ENCODE measurements at regions of chr11 and their contacts with region 1.

Region 1: DNA sequence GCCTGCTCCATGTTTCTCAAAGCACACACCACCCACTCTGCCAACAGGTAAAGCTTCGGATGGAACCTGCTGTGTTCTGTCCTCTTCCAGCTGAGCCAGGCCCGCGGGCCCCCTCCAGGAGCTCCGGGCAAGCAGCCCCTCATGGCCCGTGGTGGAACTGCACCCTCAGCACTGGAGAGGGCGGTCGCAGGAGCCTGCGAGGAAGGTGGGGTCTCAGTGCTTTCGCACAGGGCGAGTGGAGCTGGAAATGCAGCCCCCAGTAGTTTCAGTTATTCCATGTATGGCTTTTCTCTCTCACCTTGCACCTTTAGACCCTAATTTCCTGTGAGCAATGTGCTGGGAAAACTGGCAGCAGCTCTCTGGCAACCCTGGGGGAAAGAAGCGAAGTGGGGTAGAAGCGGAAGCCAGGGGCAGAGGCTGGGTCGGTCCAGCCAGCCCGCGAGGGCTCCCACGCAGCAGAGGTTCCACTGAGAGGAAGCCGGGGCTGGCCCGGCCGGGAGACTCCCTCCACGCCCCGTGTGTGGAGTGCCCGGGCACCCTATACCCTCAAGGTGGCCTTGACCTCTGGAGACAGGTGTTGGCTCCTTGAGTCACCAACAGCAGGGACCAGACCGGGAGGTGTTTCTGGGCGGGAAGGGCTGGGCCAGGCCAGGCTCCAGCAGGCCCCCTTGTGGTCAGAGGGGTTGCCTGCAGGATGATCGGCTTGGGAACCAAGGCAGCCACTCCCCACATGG is 119.9 kb upstream of the TMEM45B start:
- DNase-seq: peak; percentile 46 to 57
- H3K4me3 ChIP-seq: no peak overlapping the region
- H3K27ac ChIP-seq: no peak overlapping the region
- H3K4me1 ChIP-seq: peaks cover 14% of the 10 kb centered on the region
- H3K27me3 ChIP-seq: no peaks in the 10 kb centered on the region
- CTCF ChIP-seq: peak; percentile 75

Region 2: GRCh38 chr11:129364143-129364654 is 331.5 kb before region 1 on chr11:
- CTCF ChIA-PET with region 1: no interaction called
- POLR2A ChIA-PET with region 1: no interaction called
- intact Hi-C with region 1: loop called (anchors 1 kb)
- DNase-seq: peak; percentile 85 to 87
- H3K4me3 ChIP-seq: no peak overlapping the region
- H3K27ac ChIP-seq: no peak overlapping the region
- H3K4me1 ChIP-seq: peaks cover 42% of the 10 kb centered on the region
- H3K27me3 ChIP-seq: no peaks in the 10 kb centered on the region
- CTCF ChIP-seq: peak; percentile 97

Region 3: DNA sequence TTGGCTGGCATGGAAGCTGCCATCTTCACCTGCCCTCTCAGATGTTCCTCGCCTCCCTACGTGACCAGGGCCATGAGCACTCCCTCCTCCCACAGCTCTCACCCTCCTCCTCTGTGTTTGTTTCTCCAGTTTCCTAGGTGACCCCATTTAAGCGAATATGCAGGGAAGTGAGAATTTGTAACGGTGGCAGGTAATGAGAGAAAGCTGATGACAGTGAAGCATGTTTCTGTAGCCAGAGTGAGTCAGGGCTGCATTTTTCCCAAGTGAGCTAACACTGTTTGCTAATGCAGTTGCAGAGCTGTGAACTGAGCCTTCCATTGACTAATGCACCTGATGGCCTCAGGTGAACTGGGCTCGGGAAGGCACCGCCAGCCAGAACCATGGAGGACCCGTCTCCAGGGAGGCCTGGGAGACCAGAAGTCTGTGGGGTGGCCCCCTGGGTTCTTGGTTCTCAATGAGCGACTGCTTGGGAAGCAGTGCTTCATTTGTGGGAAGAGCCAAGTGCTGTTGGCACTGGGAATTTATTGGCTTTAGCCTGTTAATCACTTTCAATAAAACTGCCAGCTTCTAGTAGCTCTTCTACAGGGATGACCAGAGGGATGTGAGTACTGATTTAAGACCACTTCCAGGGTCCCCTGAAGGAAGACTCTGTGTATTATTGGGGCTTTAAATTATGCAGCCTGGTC is 255.6 kb before region 1 on chr11:
- CTCF ChIA-PET with region 1: no interaction called
- POLR2A ChIA-PET with region 1: no interaction called
- intact Hi-C with region 1: loop called (anchors 1 kb)
- DNase-seq: peak; percentile 75 to 99
- H3K4me3 ChIP-seq: no peak overlapping the region
- H3K27ac ChIP-seq: peak overlapping the region; percentile 71
- H3K4me1 ChIP-seq: peaks cover 32% of the 10 kb centered on the region
- H3K27me3 ChIP-seq: no peaks in the 10 kb centered on the region
- CTCF ChIP-seq: no peak

Region 4: GRCh38 chr11:129731341-129731740 is 35.6 kb after region 1 on chr11:
- CTCF ChIA-PET with region 1: no interaction called
- POLR2A ChIA-PET with region 1: no interaction called
- intact Hi-C with region 1: loop called (anchors 5 kb)
- DNase-seq: peak; percentile 70 to 98
- H3K4me3 ChIP-seq: no peak overlapping the region
- H3K27ac ChIP-seq: peak overlapping the region; percentile 89
- H3K4me1 ChIP-seq: peaks cover 71% of the 10 kb centered on the region
- H3K27me3 ChIP-seq: no peaks in the 10 kb centered on the region
- CTCF ChIP-seq: no peak

Region 5: DNA sequence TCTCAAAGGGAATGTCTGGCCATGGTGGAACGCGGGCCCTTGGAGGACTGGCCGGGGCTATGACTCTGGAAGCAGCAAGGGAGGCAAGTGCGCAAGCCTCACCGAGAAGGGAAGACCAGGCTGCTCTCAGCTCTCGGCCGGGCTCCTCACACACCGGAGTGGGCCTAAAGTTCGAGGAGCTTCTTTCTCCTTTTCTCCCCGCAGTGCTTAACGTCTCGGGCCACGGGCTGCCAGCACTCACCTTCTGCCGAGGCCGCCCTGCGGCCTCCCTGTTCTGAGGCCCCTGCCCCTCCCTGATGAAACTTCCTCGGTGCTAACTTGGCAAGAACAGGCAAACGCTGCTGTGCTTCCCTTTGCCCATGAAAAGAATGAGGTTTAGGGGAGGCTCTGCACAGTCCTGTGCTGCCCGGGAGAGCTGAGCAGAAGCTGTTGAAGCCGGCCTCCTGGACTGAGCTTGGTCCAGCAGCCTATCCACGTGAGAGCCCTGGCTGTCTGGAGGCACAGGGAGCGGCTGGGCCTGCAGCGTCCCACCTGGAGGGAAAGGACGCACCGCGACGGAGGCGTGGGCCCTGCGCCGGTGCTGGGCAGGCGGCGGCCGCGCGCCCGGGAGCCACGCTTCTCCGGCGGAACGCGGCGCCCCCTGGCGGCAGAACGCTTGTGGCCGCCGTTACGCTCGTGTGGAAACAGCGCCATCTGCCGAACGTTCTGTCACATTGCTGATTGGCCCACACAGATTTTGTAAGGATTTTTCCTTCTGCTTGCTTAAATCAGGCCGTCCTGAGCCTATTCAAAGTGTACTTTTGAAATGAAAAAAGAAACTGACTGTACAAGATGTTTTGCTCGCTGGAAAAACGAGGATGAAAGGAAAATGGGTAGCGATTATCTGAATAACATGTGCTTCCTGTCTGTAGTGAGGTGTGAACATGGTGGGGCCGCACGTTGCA is 54.9 kb after region 1 on chr11:
- CTCF ChIA-PET with region 1: interaction called, 4 read pairs
- POLR2A ChIA-PET with region 1: interaction called, 3 read pairs
- intact Hi-C with region 1: loop called (anchors 1 kb)
- DNase-seq: peak; percentile 67 to 84
- H3K4me3 ChIP-seq: peak overlapping the region; percentile 40; the same call in 1 of the 2 replicates
- H3K27ac ChIP-seq: no peak overlapping the region
- H3K4me1 ChIP-seq: 0 out of 2 replicates have a peak, but pooled peaks cover 5% of the 10 kb centered on the region
- H3K27me3 ChIP-seq: no peaks in the 10 kb centered on the region
- CTCF ChIP-seq: peak; percentile 93

Region 6: GRCh38 chr11:129861702-129862113 is 166.0 kb after region 1 on chr11:
- CTCF ChIA-PET with region 1: interaction called, 10 read pairs
- POLR2A ChIA-PET with region 1: no interaction called
- intact Hi-C with region 1: no loop called
- DNase-seq: peak; percentile 92 to 100
- H3K4me3 ChIP-seq: peak overlapping the region; percentile 41; the same call in 1 of the 2 replicates
- H3K27ac ChIP-seq: peak overlapping the region; percentile 84
- H3K4me1 ChIP-seq: peaks cover 80% of the 10 kb centered on the region
- H3K27me3 ChIP-seq: no peaks in the 10 kb centered on the region
- CTCF ChIP-seq: no peak

Measured in PC-9 (cell line).